ENCODE measurements at regions of chr1 and their contacts with region 1.

Region 1: GRCh38 chr1:67274623-67275325 is 32.9 kb upstream of the IL12RB2 start:
- DNase-seq: peak; percentile 27
- H3K4me3 Mint-ChIP-seq: no peak overlapping the region
- H3K27ac Mint-ChIP-seq: peak overlapping the region; percentile 75
- H3K4me1 Mint-ChIP-seq: peaks cover 51% of the 10 kb centered on the region
- H3K27me3 Mint-ChIP-seq: peaks cover 2% of the 10 kb centered on the region

Region 2: GRCh38 chr1:67013573-67013972 is 261.2 kb before region 1 on chr1:
- CTCF ChIA-PET with region 1: no interaction called
- POLR2A ChIA-PET with region 1: no interaction called
- intact Hi-C with region 1: no loop called
- DNase-seq: no peak
- H3K4me3 Mint-ChIP-seq: no peak overlapping the region
- H3K27ac Mint-ChIP-seq: no peak overlapping the region
- H3K4me1 Mint-ChIP-seq: peaks cover 7% of the 10 kb centered on the region
- H3K27me3 Mint-ChIP-seq: no peaks in the 10 kb centered on the region

Region 3: DNA sequence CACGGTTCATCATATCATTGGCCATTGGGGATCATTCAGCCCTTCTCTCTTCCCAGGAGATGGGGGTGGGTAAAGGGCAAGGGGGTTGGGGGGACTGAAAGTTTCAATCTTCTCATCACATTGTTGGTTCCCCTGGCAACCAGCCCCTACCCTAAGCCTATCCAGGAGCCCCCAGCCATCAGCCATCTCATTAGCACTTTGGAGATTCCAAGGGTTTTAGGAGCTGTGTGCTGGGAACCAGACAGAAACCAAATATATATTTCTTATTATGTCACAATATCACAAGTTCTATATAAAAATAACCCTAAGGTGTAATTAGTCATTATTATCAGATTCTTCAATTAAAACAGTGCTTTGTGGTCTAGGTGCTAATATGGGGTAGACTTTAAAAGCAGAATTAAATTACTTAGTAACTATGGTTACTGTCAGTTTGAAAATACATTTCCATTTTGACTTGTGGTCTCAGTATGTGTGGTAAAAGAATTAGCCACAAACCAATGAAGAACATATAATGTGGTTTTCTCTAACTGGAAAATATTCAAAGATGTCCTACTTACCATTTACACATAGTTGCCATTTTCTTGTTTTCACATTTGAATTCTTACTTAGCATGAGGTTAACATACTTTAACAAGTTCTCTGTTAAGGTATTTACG is 80.4 kb before region 1 on chr1:
- CTCF ChIA-PET with region 1: no interaction called
- POLR2A ChIA-PET with region 1: interaction called, 7 read pairs
- intact Hi-C with region 1: loop called (anchors 1 kb)
- DNase-seq: no peak
- H3K4me3 Mint-ChIP-seq: no peak overlapping the region
- H3K27ac Mint-ChIP-seq: peak overlapping the region; percentile 79
- H3K4me1 Mint-ChIP-seq: peaks cover 28% of the 10 kb centered on the region
- H3K27me3 Mint-ChIP-seq: peaks cover 5% of the 10 kb centered on the region

Region 4: DNA sequence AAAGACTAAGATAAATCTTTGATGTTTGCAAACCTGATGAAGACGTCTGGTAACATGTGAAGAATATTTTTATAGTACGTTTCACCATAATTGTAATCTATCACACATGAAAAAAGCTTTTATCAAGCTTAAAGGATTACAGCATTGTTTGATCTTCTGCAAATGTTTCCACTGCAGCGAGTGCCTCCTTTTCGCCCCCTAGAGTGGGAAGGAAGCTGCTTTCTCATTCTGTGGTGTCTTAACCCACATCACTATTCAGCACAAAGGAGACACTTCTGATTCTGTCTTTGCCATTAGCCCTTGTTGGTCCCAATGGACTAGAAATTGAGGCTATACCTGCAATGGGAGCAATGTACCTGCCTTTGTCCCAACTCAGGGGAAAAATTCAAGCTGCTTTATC is 13.1 kb before region 1 on chr1:
- CTCF ChIA-PET with region 1: interaction called, 3 read pairs
- POLR2A ChIA-PET with region 1: no interaction called
- intact Hi-C with region 1: loop called (anchors 1 kb)
- DNase-seq: peak; percentile 49
- H3K4me3 Mint-ChIP-seq: no peak overlapping the region
- H3K27ac Mint-ChIP-seq: no peak overlapping the region
- H3K4me1 Mint-ChIP-seq: peaks cover 18% of the 10 kb centered on the region
- H3K27me3 Mint-ChIP-seq: no peaks in the 10 kb centered on the region

Region 5: GRCh38 chr1:67307251-67308060 is 32.7 kb after region 1 on chr1 and contains the start of gene IL12RB2:
- CTCF ChIA-PET with region 1: interaction called, 4 read pairs
- POLR2A ChIA-PET with region 1: interaction called, 10 read pairs
- intact Hi-C with region 1: loop called (anchors 1 kb)
- DNase-seq: peak; percentile 75
- H3K4me3 Mint-ChIP-seq: peak within 1 kb of the TSS; percentile 95
- H3K27ac Mint-ChIP-seq: peak within 1 kb of the TSS; percentile 96
- H3K4me1 Mint-ChIP-seq: peaks cover 52% of the 10 kb centered on the region
- H3K27me3 Mint-ChIP-seq: peaks cover 2% of the 10 kb centered on the region
- total RNA-seq, gene IL12RB2: 86.9 to 90.7 TPM

Region 6: GRCh38 chr1:67404212-67404620 is 129.4 kb after region 1 on chr1:
- CTCF ChIA-PET with region 1: no interaction called
- POLR2A ChIA-PET with region 1: no interaction called
- intact Hi-C with region 1: loop called (anchors 1 kb)
- DNase-seq: no peak
- H3K4me3 Mint-ChIP-seq: no peak overlapping the region
- H3K27ac Mint-ChIP-seq: no peak overlapping the region
- H3K4me1 Mint-ChIP-seq: peaks cover 14% of the 10 kb centered on the region
- H3K27me3 Mint-ChIP-seq: no peaks in the 10 kb centered on the region

Measured in activated CD4-positive, alpha-beta memory T cell treated with anti-CD3 and anti-CD28 coated beads for 36 hours (primary cell).